Activated T-helper 1 cell treated with anti-CD3 and anti-CD28 coated beads, Interleukin-12 subunit alpha, Interleukin-12 subunit beta, Interleukin-2, Interleukin-4 antibody, amounts not matched to agents 30 ng/mL and 10 ng/mL and 1 ng/mL, durations not matched to agents 14 hours and 24 hours and 36 hours (primary cell): ENCODE measurements at regions of chr22 and their contacts with region 1.

Region 1: GRCh38 chr22:50185384-50186087 is at the start of gene TRABD:
- DNase-seq: peak; percentile 84
- H3K4me3 Mint-ChIP-seq: peak within 1 kb of the TSS; percentile 96
- H3K27ac Mint-ChIP-seq: peak within 1 kb of the TSS; percentile 94
- H3K4me1 Mint-ChIP-seq: peaks cover 14% of the 10 kb centered on the region
- H3K27me3 Mint-ChIP-seq: peaks cover 4% of the 10 kb centered on the region
- total RNA-seq, gene TRABD: 94.1 and 96.8 TPM in 2 replicates

Region 2: DNA sequence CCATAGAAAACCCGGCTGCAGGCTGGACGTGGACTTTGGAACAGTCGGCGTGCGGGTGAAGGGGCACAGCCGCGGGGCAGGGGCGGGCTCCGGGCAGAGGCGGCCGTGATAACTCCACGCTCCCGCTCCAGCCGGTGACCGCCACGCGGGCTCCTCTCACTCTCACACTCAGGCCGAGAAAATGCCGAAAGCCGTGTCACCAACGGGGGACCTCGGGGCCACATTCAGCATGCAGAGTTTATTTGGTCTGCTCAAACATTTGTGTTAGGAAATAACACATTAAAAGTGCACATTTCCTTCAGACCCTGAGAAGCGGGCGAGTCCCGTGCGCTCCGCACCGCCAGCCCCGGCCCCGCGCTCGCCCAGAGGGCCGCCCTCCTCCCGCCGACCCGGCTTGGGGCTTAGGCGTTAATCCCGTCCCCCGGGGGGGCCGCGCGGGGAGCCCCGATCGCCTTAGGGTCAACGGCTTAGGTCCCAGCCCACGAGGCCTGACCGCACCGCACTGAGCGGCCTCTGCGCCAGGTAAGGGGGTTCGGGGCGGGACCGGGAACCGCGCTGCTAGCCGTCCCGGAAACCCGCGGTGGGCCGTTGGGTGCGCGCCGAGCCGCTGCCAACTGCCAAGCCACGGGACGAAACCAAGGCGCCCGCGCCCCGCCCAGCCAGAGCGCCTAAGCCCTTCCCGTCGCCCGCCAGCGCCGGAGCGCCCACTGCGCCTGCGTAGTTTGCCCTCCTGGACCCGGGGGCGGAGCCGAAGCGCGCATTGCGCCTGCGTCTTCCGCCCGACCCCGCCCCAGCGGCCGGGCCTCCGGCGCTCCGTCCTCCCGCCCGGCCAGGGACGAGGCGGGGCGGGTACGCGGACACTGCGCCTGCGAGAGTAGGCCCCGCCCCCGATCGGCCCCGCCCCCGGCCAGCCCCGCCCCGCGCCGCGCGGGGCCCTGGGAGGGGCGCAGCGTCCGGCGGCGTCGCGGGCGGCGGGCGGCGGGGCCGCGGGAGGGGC is 332.3 kb before region 1 on chr22 and contains the start of gene ZBED4:
- intact Hi-C with region 1: loop called (anchors 5 kb)
- DNase-seq: peak; percentile 99
- H3K4me3 Mint-ChIP-seq: peak within 1 kb of the TSS; percentile 98
- H3K27ac Mint-ChIP-seq: peak within 1 kb of the TSS; percentile 97
- H3K4me1 Mint-ChIP-seq: peaks cover 32% of the 10 kb centered on the region
- H3K27me3 Mint-ChIP-seq: peaks cover 10% of the 10 kb centered on the region
- total RNA-seq, gene ZBED4: 19.4 and 20.9 TPM in 2 replicates

Region 3: DNA sequence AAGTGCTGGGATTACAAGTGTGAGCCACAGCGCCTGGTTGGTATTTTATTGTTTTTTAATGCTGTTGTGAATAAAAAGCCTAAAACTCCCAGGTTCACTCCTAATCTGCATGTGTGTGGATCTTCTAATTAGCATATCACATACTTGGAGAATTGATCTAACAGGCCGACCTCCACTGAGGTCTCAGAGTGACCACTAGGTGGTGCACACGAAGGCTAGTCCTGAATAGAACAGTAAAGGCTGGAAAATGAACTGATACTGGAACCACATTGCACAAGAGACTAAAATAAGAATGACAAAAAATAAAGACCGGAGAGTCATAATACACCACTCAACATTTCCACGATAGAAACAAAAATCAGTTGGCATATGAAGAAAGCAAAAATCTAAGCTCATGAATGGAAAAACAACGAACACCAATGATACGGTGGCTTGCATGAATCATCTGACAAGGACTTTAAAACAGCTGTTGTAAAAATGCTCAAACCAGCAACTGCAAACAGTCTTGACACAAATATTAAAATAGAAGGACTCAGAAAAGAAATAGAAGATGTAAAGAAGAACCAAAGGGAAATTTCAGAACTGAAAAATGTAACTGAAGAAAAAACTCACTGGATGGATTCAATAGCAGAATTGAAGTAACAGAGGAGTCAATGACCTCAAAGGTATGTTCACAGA is 205.8 kb before region 1 on chr22:
- intact Hi-C with region 1: loop called (anchors 5 kb)
- DNase-seq: no peak
- H3K4me3 Mint-ChIP-seq: peak overlapping the region; percentile 1
- H3K27ac Mint-ChIP-seq: peak overlapping the region; percentile 70
- H3K4me1 Mint-ChIP-seq: peaks cover 37% of the 10 kb centered on the region
- H3K27me3 Mint-ChIP-seq: peaks cover 9% of the 10 kb centered on the region

Region 4: GRCh38 chr22:50169774-50170341 is 15.7 kb before region 1 on chr22:
- intact Hi-C with region 1: loop called (anchors 2 kb)
- DNase-seq: peak; percentile 33
- H3K4me3 Mint-ChIP-seq: peak overlapping the region; percentile 54
- H3K27ac Mint-ChIP-seq: no peak overlapping the region
- H3K4me1 Mint-ChIP-seq: no peaks in the 10 kb centered on the region
- H3K27me3 Mint-ChIP-seq: peaks cover 39% of the 10 kb centered on the region

Region 5: DNA sequence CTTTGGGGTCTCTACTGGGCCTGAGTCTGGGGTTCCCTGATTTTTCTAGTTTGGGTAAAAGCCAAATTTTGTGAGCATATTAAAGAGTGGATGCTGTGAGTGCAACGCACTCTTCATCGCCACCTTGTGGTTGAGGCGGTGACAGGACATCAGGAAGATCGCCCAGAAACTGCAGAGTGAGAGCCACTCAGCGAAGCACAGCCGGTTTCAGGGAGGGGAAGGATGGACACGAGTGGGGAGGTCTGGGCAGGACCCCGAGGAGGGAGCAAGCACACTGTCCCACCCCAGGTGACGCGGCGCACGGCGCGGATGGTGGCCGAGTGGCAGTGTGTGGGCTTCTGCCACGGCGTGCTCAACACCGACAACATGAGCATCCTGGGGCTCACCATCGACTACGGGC is 24.4 kb after region 1 on chr22:
- intact Hi-C with region 1: loop called (anchors 2 kb)
- DNase-seq: no peak
- H3K4me3 Mint-ChIP-seq: no peak overlapping the region
- H3K27ac Mint-ChIP-seq: no peak overlapping the region
- H3K4me1 Mint-ChIP-seq: peaks cover 5% of the 10 kb centered on the region
- H3K27me3 Mint-ChIP-seq: no peaks in the 10 kb centered on the region